Activated T-helper 1 cell treated with anti-CD3 and anti-CD28 coated beads, Interleukin-12 subunit alpha, Interleukin-12 subunit beta, Interleukin-2, Interleukin-4 antibody, amounts not matched to agents 30 ng/mL and 10 ng/mL and 1 ng/mL, durations not matched to agents 14 hours and 24 hours and 36 hours (primary cell): ENCODE measurements at regions of chr6 and their contacts with region 1.

Region 1: GRCh38 chr6:14743465-14744211 is 502.2 kb upstream of the JARID2 start:
- DNase-seq: peak; percentile 59
- H3K4me3 Mint-ChIP-seq: peak overlapping the region; percentile 66
- H3K27ac Mint-ChIP-seq: peak overlapping the region; percentile 94
- H3K4me1 Mint-ChIP-seq: peaks cover 80% of the 10 kb centered on the region
- H3K27me3 Mint-ChIP-seq: no peaks in the 10 kb centered on the region

Region 2: DNA sequence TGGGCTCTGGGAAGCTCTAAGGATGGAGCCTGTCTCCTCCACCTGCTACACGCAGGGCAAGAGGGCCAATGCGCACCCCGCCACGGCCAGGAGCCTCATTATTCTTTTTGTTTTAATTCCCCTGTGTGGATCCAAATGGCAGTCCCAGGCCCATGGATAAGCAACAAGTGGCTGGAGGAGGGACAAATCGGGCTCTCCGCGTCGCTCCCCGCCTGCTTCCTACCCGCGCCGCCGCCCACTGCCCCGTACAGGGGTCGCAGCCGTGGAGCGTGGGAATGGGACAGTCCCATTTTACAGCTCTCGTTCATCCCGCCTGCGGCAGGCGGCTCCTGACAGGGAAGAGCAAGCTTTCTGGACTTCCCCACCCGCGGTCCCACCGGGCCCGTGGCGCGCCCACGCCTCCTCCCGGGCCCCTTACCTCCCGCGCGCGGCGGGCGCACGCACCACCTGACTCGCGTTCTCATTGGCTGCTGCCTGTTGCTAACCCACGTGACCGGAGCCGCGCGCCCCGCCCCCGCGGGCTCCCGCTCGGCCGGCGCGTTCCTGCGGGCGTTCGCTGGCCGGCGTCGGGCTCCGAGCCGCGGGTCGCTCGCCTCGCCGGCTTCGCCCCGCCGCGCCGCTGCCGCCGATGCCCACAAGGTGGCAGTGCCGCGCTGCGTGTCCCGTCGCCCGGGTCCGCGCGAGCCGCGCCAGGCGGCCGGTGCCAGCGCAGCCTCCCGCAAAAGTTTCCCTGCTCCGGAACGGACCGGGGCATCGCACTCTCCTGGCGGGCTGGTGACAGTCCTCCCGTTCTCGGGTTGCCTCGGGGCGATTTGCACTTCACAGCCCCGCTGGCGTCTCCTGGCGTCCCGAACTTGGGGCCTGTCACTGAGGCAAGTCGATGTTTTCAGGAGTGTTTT is 532.7 kb before region 1 on chr6:
- intact Hi-C with region 1: loop called (anchors 5 kb)
- DNase-seq: peak; percentile 91
- H3K4me3 Mint-ChIP-seq: peak overlapping the region; percentile 80
- H3K27ac Mint-ChIP-seq: peak overlapping the region; percentile 70
- H3K4me1 Mint-ChIP-seq: peaks cover 29% of the 10 kb centered on the region
- H3K27me3 Mint-ChIP-seq: peaks cover 6% of the 10 kb centered on the region

Region 3: DNA sequence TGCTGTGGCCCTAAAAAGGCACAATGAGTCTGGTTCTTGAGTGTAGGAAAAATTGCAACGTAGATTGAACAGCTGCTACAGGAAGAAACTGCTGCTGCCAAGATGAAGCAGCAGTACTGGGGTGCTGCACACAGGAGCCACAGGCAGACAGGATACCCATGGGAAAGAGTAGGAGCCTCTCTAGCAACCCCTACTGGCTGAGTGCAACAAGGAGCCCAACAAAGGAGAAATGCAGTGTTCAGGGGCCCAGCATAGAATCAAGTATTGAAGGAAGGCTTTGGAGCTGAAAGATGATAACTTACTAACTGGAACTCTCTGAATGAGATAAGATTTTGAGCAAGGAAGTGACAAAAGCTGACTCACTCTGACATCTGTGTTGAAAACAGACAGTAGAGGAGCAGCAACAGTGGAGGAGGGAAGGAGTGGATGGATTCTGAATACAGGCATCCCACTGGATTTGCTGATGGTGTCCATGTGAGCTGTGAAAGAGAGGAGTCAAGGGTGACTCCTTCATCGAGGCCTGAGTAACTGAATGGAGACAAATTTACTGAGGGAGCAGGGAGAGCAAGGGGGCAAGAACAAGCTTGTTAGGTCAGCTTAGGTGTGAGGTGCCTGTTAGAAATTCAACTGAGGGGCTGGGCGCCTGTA is 32.5 kb before region 1 on chr6:
- intact Hi-C with region 1: loop called (anchors 1 kb)
- DNase-seq: peak; percentile 56
- H3K4me3 Mint-ChIP-seq: peak overlapping the region; percentile 19
- H3K27ac Mint-ChIP-seq: peak overlapping the region; percentile 92
- H3K4me1 Mint-ChIP-seq: peaks cover 36% of the 10 kb centered on the region
- H3K27me3 Mint-ChIP-seq: peaks cover 4% of the 10 kb centered on the region

Region 4: DNA sequence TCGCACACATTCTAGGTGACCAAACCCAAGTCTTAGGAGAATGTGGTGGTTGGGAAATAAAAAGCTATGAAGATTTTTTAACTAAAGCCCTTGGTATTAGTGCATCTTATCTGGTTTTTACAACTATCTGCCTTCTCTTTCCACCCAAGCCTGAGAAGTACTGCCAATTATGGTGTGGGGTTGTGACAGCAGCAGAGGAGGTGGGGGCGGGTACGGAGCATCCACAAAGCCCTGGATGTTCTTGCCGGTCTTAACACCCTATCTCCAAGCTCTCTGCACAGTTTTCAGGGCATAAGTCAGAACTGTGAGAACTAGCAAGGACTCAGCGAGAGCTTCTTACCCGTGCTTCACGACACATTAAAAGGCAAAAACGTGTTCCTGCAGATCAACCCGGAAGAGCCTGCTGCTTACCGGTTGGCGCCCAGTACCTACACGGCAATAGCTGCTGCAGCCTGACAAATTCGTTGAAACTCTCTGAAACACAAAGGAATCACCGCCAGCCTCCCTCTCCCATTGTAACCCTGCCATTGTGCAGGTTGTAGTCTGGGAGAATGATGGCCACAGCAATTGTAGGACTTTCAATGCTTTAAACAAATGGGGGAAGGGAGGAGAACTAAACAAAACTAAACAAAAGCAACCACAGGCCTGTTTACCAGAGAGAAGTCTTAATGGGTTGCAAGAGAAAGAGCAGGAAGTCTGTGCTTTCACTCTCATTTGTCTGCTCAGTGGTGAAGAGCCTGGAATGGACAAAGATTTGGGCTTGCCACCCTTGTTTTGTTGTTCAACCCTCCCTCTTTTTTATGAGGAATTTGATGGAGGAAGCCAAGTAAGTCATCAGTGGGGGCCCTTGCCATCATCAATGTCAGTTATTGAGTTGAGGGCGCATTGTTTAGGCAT is 41.2 kb after region 1 on chr6:
- intact Hi-C with region 1: loop called (anchors 5 kb)
- DNase-seq: no peak
- H3K4me3 Mint-ChIP-seq: peak overlapping the region; percentile 61
- H3K27ac Mint-ChIP-seq: peak overlapping the region; percentile 81
- H3K4me1 Mint-ChIP-seq: peaks cover 47% of the 10 kb centered on the region
- H3K27me3 Mint-ChIP-seq: peaks cover 2% of the 10 kb centered on the region

Region 5: DNA sequence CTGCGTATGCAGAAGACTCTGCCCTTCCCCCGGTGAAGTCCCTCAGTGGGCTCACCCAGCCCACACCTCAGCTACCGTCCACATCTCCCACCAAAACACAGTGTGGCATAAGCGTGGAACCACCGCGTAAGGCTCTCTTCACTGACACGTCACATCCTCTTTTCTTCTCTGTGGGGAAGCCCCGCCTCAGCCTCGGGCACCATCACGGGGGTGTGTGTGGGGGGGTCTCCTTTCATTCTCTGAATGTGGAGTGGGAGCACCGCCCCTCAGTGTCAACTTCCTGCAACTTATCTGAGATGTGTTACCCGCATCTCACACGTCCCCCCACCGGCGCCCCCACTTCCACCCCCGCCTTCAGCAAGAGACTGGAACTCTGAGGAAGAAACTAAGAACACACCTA is 113.9 kb after region 1 on chr6:
- intact Hi-C with region 1: loop called (anchors 1 kb)
- DNase-seq: peak; percentile 42
- H3K4me3 Mint-ChIP-seq: peak overlapping the region; percentile 51
- H3K27ac Mint-ChIP-seq: peak overlapping the region; percentile 96
- H3K4me1 Mint-ChIP-seq: peaks cover 42% of the 10 kb centered on the region
- H3K27me3 Mint-ChIP-seq: no peaks in the 10 kb centered on the region